ENCODE measurements at regions of chr4 and their contacts with region 1.

Region 1: DNA sequence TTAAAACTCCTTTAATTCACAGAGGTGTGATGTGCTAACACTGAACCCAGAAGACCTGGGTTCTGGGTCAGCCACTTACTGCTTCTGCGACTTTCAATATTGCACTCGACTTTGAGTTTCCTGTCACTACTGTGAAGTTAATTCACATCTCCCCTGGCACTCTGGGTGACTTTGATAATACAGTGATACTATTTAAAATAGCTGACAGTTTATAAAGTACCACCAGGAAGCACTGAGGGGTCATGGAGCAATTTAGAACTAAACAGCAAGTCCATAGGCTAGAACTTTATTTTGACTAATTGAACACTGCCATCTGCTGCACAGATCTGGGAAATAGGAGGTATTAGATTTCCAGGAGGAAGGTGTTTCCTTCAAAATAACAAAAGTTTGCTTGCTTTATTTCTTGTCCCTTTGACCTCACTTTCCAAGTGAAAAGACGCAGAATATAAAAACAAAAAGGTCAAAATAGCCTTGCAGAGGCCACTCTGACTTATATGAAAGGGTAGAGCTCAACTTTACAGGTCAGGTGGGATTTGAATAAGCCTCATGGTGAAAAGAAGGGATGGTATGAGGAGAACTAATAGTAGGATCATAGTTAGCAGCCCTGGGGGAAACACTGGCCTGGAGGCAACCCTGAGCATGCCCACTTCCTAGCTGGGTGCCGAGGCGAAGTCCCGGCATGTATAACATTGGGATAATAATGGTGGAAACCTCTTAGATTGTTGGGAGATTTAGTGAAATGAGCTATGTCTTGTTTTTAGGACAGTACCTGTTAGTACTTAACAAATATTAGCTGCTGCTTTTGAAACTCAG is 53.4 kb downstream of the ZNF518B start:
- DNase-seq: peak; percentile 55
- H3K4me3 Mint-ChIP-seq: no peak overlapping the region
- H3K27ac Mint-ChIP-seq: no peak overlapping the region
- H3K4me1 Mint-ChIP-seq: peaks cover 4% of the 10 kb centered on the region
- H3K27me3 Mint-ChIP-seq: no peaks in the 10 kb centered on the region
- CTCF ChIP-seq: peak; percentile 36

Region 2: GRCh38 chr4:10018818-10019461 is 384.9 kb before region 1 on chr4:
- CTCF ChIA-PET with region 1: interaction called, 6 read pairs
- POLR2A ChIA-PET with region 1: no interaction called
- intact Hi-C with region 1: loop called (anchors 5 kb)
- DNase-seq: peak; percentile 98
- H3K4me3 Mint-ChIP-seq: peak overlapping the region; percentile 80
- H3K27ac Mint-ChIP-seq: peak overlapping the region; percentile 97
- H3K4me1 Mint-ChIP-seq: peaks cover 48% of the 10 kb centered on the region
- H3K27me3 Mint-ChIP-seq: no peaks in the 10 kb centered on the region
- CTCF ChIP-seq: peak; percentile 99

Region 3: GRCh38 chr4:10157478-10158332 is 246.1 kb before region 1 on chr4:
- CTCF ChIA-PET with region 1: interaction called, 454 read pairs
- POLR2A ChIA-PET with region 1: interaction called, 8 read pairs
- intact Hi-C with region 1: loop called (anchors 2 kb)
- DNase-seq: peak; percentile 72
- H3K4me3 Mint-ChIP-seq: no peak overlapping the region
- H3K27ac Mint-ChIP-seq: no peak overlapping the region
- H3K4me1 Mint-ChIP-seq: peaks cover 6% of the 10 kb centered on the region
- H3K27me3 Mint-ChIP-seq: no peaks in the 10 kb centered on the region
- CTCF ChIP-seq: peak; percentile 55

Region 4: GRCh38 chr4:10173037-10173753 is 230.6 kb before region 1 on chr4:
- CTCF ChIA-PET with region 1: interaction called, 454 read pairs
- POLR2A ChIA-PET with region 1: interaction called, 3 read pairs
- intact Hi-C with region 1: no loop called
- DNase-seq: peak; percentile 24
- H3K4me3 Mint-ChIP-seq: no peak overlapping the region
- H3K27ac Mint-ChIP-seq: no peak overlapping the region
- H3K4me1 Mint-ChIP-seq: no peaks in the 10 kb centered on the region
- H3K27me3 Mint-ChIP-seq: no peaks in the 10 kb centered on the region
- CTCF ChIP-seq: no peak

Region 5: GRCh38 chr4:10192331-10192730 is 211.5 kb before region 1 on chr4:
- CTCF ChIA-PET with region 1: interaction called, 25 read pairs
- POLR2A ChIA-PET with region 1: no interaction called
- intact Hi-C with region 1: no loop called
- DNase-seq: no peak
- H3K4me3 Mint-ChIP-seq: no peak overlapping the region
- H3K27ac Mint-ChIP-seq: no peak overlapping the region
- H3K4me1 Mint-ChIP-seq: no peaks in the 10 kb centered on the region
- H3K27me3 Mint-ChIP-seq: no peaks in the 10 kb centered on the region
- CTCF ChIP-seq: no peak

Measured in MCF 10A (cell line).